CD14-positive monocyte (primary cell): ENCODE measurements at regions of chr6 and their contacts with region 1.

Region 1: GRCh38 chr6:146857180-146857979 is 258.6 kb downstream of the ADGB start:
- DNase-seq: peak; percentile 78 to 89 (median 82)
- H3K4me3 ChIP-seq: peak overlapping the region in 2 of 3 experiments; percentile 13 to 70
- H3K4me3 Mint-ChIP-seq: peak overlapping the region; percentile 32 to 44
- H3K27ac ChIP-seq: peak overlapping the region in 1 of 2 donors; percentile 65
- H3K27ac Mint-ChIP-seq: peak overlapping the region in 2 of 7 donors; percentile 59 to 78
- H3K4me1 ChIP-seq: peaks cover 6 to 7% of the 10 kb centered on the region in 2 donors
- H3K4me1 Mint-ChIP-seq: peaks cover 5% of the 10 kb centered on the region
- H3K27me3 ChIP-seq: no peaks in the 10 kb centered on the region
- H3K27me3 Mint-ChIP-seq: no peaks in the 10 kb centered on the region
- CTCF ChIP-seq: peak; percentile 98

Region 2: DNA sequence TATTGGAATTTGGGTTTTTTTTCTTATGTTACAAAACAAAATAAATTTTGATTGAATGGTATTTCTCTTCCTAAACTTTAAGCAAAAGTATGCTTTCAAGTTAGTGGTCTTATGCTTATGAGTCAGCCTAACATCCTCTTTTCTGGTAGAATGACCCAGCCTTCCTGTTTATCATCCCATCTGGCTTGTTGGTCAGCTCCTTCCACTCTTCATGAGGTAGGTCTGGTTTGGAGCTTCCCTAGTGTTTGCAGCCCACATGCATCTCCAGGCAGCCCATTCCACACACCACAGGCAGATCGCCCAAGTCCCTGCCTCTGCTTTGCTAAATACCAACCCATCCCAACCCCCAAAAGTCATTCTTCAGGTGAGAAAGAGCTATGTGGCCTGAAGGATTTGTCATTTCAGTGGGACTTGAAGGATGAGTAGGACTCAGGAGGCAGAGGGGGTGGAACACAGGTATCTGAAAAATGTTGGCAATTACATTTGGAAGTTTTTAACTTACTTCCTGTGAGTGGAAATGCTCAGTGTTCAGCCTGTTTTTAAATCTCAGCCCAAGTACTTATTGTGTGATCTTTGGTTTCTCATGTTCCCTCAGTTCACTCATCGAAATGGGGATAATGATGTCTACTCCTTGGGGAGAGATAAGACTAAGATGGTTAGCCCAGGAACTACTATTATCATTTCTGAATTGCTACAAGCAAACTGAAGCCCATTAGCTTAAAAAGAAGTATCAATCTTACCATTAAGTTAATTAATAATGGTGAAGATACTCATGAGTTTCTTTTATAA is 35.4 kb after region 1 on chr6:
- intact Hi-C with region 1: no loop called
- DNase-seq: peak; percentile 82 to 96 (median 93)
- H3K4me3 ChIP-seq: peak overlapping the region in 1 of 3 experiments; percentile 8
- H3K4me3 Mint-ChIP-seq: no peak overlapping the region
- H3K27ac ChIP-seq: peak overlapping the region; percentile 34 to 77
- H3K27ac Mint-ChIP-seq: peak overlapping the region; percentile 79 to 94 (median 91)
- H3K4me1 ChIP-seq: peaks cover 18 to 34% of the 10 kb centered on the region in 2 donors
- H3K4me1 Mint-ChIP-seq: peaks cover 31% of the 10 kb centered on the region
- H3K27me3 ChIP-seq: no peaks in the 10 kb centered on the region
- H3K27me3 Mint-ChIP-seq: peaks cover 0 to 2% (median 0%) of the 10 kb centered on the region in 3 donors
- CTCF ChIP-seq: no peak

Region 3: GRCh38 chr6:147222160-147222838 is 364.9 kb after region 1 on chr6:
- intact Hi-C with region 1: loop called in 1 of 2 experiments (anchors 5 kb)
- DNase-seq: no peak
- H3K4me3 ChIP-seq: no peak overlapping the region
- H3K4me3 Mint-ChIP-seq: peak overlapping the region in 1 of 2 donors; percentile 55
- H3K27ac ChIP-seq: no peak overlapping the region
- H3K27ac Mint-ChIP-seq: peak overlapping the region in 3 of 7 donors; percentile 12 to 70 (median 54)
- H3K4me1 ChIP-seq: peaks cover 8 to 13% of the 10 kb centered on the region in 2 donors
- H3K4me1 Mint-ChIP-seq: peaks cover 26% of the 10 kb centered on the region
- H3K27me3 ChIP-seq: no peaks in the 10 kb centered on the region
- H3K27me3 Mint-ChIP-seq: peaks cover 0 to 2% (median 0%) of the 10 kb centered on the region in 3 donors
- CTCF ChIP-seq: peak; percentile 47

Region 4: GRCh38 chr6:148166339-148166968 is 1309.1 kb after region 1 on chr6:
- intact Hi-C with region 1: loop called in 1 of 2 experiments (anchors 10 kb)
- DNase-seq: no peak
- H3K4me3 ChIP-seq: no peak overlapping the region
- H3K4me3 Mint-ChIP-seq: no peak overlapping the region
- H3K27ac ChIP-seq: no peak overlapping the region
- H3K27ac Mint-ChIP-seq: no peak overlapping the region
- H3K4me1 ChIP-seq: no peaks in the 10 kb centered on the region
- H3K4me1 Mint-ChIP-seq: no peaks in the 10 kb centered on the region
- H3K27me3 ChIP-seq: no peaks in the 10 kb centered on the region
- H3K27me3 Mint-ChIP-seq: peaks cover 0 to 9% (median 0%) of the 10 kb centered on the region in 3 donors
- CTCF ChIP-seq: peak; percentile 52